Tibial artery (tissue), 4 donors: ENCODE measurements at regions of chr1 and their contacts with region 1.

Region 1: DNA sequence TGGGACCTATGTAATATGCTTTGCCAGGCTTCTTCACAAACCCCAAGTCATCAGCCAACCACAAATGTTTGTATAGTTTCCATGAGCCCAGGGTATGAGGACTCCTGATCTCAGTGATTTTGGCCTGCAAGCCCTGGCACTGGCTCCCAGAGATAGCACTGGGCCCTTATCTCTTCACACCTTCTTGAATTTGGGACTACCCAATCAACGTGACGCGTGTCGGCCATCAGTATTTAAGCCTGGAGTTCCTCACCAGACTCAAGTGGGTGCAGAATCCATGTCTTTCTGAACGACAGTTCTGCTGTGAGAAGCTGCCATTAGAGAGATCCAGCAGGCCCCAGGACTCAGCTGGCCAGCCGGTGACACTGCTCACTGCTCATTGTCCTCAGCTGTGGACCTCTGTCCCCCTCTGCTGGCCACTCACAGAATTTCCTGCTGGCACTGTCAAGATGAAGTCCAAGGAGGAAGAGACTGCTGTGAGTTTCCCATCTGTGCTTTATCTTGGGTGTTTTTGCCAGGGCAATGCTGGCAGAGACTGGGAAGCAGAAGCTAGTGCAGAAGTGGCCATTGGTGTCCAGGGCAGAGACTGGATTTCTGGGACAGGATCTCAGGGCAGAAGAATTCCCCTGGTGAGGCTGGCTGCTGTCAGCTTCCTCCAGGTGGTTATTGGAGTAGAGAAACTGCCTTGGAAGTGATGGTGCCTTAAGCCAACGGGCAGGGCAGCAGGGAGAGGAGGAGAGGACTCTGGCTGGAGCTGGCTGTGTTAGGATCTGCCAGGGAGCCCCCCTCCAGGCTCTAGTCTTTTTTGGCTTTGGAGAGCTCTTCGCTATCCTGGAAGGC is 28.4 kb downstream of the TMCC2 start:
- DNase-seq: peak; percentile 94 to 96
- H3K4me3 ChIP-seq: no peak overlapping the region
- H3K27ac ChIP-seq: peak overlapping the region; percentile 40 to 49
- H3K4me1 ChIP-seq: peaks cover 0 to 21% (median 8%) of the 10 kb centered on the region in 4 donors
- H3K27me3 ChIP-seq: no peaks in the 10 kb centered on the region
- CTCF ChIP-seq: peak; percentile 97 to 99

Region 2: GRCh38 chr1:204989266-204990058 is 266.7 kb before region 1 on chr1:
- intact Hi-C with region 1: loop called (anchors 10 kb)
- DNase-seq: peak in 1 of 2 donors; percentile 39
- H3K4me3 ChIP-seq: no peak overlapping the region
- H3K27ac ChIP-seq: no peak overlapping the region
- H3K4me1 ChIP-seq: no peaks in the 10 kb centered on the region
- H3K27me3 ChIP-seq: no peaks in the 10 kb centered on the region
- CTCF ChIP-seq: peak; percentile 71 to 72

Region 3: GRCh38 chr1:205121660-205122488 is 134.3 kb before region 1 on chr1 and contains the start of gene RBBP5:
- intact Hi-C with region 1: loop called (anchors 5 kb)
- DNase-seq: peak; percentile 94 to 97
- H3K4me3 ChIP-seq: peak within 1 kb of the TSS; percentile 76 to 96
- H3K27ac ChIP-seq: peak within 1 kb of the TSS; percentile 87 to 92
- H3K4me1 ChIP-seq: peaks cover 0 to 36% (median 25%) of the 10 kb centered on the region in 4 donors
- H3K27me3 ChIP-seq: no peaks in the 10 kb centered on the region
- CTCF ChIP-seq: peak; percentile 30 to 55

Region 4: GRCh38 chr1:205227584-205228006 is 28.6 kb before region 1 on chr1 and contains the start of gene TMCC2:
- intact Hi-C with region 1: loop called (anchors 1 kb)
- DNase-seq: peak; percentile 84 to 93
- H3K4me3 ChIP-seq: peak within 1 kb of the TSS; percentile 59 to 84
- H3K27ac ChIP-seq: peak within 1 kb of the TSS; percentile 47 to 62
- H3K4me1 ChIP-seq: peaks cover 0 to 26% (median 17%) of the 10 kb centered on the region in 4 donors
- H3K27me3 ChIP-seq: no peaks in the 10 kb centered on the region
- CTCF ChIP-seq: no peak